A549 (cell line): ENCODE measurements at regions of chr20 and their contacts with region 1.

Region 1: GRCh38 chr20:62822788-62823651 is 6.2 kb downstream of the COL9A3 start:
- DNase-seq: peak; percentile 88 to 92
- ATAC-seq: peak; percentile 51 to 65; a peak in 5 of 6 replicates
- H3K4me3 ChIP-seq: no peak overlapping the region
- H3K27ac ChIP-seq: peak overlapping the region in 1 of 2 experiments; percentile 41; a peak in 3 of 6 replicates
- H3K4me1 ChIP-seq: peaks cover 48% of the 10 kb centered on the region
- CTCF ChIP-seq: peak; percentile 62
- EP300 ChIP-seq: no peak
- POLR2A ChIP-seq: no peak
- RAD21 ChIP-seq: peak; percentile 75 to 85

Region 2: DNA sequence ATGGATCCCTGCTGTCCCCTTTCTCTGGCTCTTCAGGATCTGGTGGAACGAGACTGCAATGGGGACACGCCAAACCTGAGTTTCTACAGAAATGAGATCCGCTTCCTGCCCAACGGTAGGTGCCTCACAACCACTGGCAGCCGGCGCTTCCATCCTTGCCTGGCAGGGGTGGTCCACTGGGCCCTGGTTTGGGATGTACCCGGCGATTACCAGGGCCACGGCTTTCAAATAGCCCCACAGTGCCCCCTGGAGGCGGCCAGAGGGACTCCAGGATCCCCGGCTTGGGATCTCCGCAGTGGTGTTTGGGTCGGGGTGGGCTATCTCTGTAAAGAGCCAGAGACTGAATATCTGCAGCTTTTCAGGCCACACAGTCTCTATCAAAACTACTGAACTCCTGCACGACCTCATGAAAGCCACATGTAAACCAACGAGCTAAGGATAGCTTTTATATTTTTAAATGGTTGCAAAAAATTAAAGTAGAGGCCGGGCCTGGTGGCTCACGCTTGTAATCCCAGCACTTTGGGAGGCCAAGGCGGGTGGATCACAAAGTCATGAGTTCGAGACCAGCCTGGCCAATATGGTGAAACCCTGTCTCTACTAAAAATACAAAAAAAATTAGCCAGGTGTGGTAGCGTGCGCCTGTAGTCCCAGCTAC is 14.7 kb before region 1 on chr20:
- CTCF ChIA-PET with region 1: interaction called, 76 read pairs
- POLR2A ChIA-PET with region 1: no interaction called
- DNase-seq: peak; percentile 65 to 83
- ATAC-seq: peak; percentile 58 to 82; a peak in 4 of 6 replicates
- H3K4me3 ChIP-seq: no peak overlapping the region
- H3K27ac ChIP-seq: no peak overlapping the region
- H3K4me1 ChIP-seq: peaks cover 17% of the 10 kb centered on the region
- CTCF ChIP-seq: peak; percentile 85
- EP300 ChIP-seq: no peak
- POLR2A ChIP-seq: no peak
- RAD21 ChIP-seq: peak; percentile 69 to 73

Region 3: GRCh38 chr20:62840244-62841197 is 17.5 kb after region 1 on chr20:
- CTCF ChIA-PET with region 1: interaction called, 16 read pairs
- POLR2A ChIA-PET with region 1: no interaction called
- DNase-seq: no peak
- ATAC-seq: no peak
- H3K4me3 ChIP-seq: no peak overlapping the region
- H3K27ac ChIP-seq: no peak overlapping the region
- H3K4me1 ChIP-seq: peaks cover 7% of the 10 kb centered on the region; the same call in 2 of the 3 replicates
- CTCF ChIP-seq: no peak
- EP300 ChIP-seq: no peak
- POLR2A ChIP-seq: no peak
- RAD21 ChIP-seq: no peak

Region 4: GRCh38 chr20:62846188-62846890 is 23.3 kb after region 1 on chr20:
- CTCF ChIA-PET with region 1: interaction called, 16 read pairs
- POLR2A ChIA-PET with region 1: no interaction called
- DNase-seq: no peak
- ATAC-seq: no peak
- H3K4me3 ChIP-seq: no peak overlapping the region
- H3K27ac ChIP-seq: no peak overlapping the region
- H3K4me1 ChIP-seq: no peaks in the 10 kb centered on the region
- CTCF ChIP-seq: no peak
- EP300 ChIP-seq: no peak
- POLR2A ChIP-seq: no peak
- RAD21 ChIP-seq: no peak